ENCODE measurements at regions of chr5 and their contacts with region 1.

Region 1: GRCh38 chr5:72816311-72817145 is at the start of gene TNPO1:
- DNase-seq: peak; percentile 92
- CTCF ChIP-seq: no peak

Region 2: GRCh38 chr5:72611118-72611730 is 205.3 kb before region 1 on chr5:
- CTCF ChIA-PET with region 1: interaction called, 55 read pairs
- POLR2A ChIA-PET with region 1: interaction called, 3 read pairs
- DNase-seq: peak; percentile 63
- CTCF ChIP-seq: peak; percentile 71

Region 3: GRCh38 chr5:72796001-72796400 is 20.5 kb before region 1 on chr5:
- CTCF ChIA-PET with region 1: interaction called, 14 read pairs
- POLR2A ChIA-PET with region 1: no interaction called
- DNase-seq: no peak
- CTCF ChIP-seq: no peak

Region 4: DNA sequence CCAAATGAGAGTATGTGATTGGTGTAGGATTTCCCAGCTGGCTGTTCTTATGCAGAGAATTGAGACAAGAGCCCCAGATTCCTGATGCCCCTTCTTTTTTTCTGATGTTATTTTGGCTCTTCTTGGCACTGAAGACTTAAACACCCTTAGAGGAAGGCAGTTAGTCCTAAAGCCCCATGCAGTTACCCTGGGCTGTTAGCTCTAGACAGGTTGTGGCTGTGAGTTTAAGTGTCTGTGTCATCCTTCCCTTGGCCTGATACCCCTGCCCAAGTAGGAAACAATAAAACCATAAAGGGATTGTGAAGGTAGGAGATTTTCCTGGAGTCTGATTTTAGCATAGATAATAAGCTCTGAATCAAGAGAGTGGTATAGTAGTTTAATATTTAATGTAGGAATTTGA is 13.2 kb after region 1 on chr5:
- CTCF ChIA-PET with region 1: interaction called, 66 read pairs
- POLR2A ChIA-PET with region 1: no interaction called
- DNase-seq: no peak
- CTCF ChIP-seq: no peak

Region 5: DNA sequence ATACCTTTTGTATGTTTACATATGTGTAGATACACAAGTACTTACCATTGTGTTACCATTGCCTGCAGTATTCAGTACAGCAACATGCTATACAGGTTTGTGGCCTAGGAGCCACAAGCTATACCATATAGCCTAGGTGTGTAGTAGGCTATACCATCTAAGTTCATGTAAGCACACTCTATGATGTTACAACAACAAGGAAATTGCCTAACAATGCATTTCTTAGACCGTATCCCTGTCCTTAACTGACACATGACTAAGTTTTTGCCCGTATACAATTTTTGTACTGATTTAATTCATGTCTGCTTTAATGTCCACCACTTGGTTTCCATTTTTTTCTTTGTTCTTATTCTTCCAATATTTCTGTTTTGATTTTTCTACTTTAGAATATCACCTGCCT is 18.4 kb after region 1 on chr5:
- CTCF ChIA-PET with region 1: interaction called, 66 read pairs
- POLR2A ChIA-PET with region 1: no interaction called
- DNase-seq: no peak
- CTCF ChIP-seq: no peak

Region 6: DNA sequence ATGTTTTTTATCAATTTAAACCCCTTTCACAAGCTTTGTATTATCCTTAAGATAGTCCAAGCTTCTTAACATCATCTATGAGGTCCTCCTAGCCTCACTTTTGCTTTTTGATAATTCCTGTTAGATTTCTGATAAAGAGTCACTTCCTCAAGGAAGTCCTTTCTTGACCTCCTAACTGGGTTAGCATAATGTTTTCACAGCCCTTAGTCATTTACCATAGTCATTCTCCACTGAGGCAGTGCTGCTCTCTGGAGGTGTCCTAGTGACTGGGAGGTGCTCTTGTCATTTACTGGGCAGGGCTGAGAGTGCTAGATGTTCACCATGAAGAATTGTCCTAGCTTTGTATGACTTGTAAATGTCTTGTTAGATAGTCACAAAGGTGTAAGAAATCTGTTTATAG is 26.3 kb after region 1 on chr5:
- CTCF ChIA-PET with region 1: interaction called, 31 read pairs
- POLR2A ChIA-PET with region 1: no interaction called
- DNase-seq: no peak
- CTCF ChIP-seq: peak; percentile 23

Region 7: DNA sequence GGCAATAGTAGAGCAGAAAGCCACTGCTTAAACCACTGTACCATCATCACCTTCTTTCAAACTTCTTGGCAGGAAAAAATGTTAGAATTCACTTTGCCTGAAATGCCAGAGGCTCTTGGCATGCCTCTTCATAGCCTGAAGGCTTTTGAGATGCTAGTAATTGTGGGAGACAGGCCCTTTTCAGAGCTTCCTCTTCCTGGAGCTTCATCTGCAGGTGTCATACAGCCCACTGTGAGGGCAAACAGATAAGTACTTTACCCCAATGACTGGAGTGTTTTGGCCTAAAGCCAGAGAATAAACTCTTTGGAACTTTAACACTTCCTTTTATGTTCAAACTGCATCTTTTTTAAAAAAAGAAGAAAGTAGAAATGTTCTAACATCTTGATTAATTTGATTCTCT is 222.6 kb after region 1 on chr5:
- CTCF ChIA-PET with region 1: no interaction called
- POLR2A ChIA-PET with region 1: no interaction called
- DNase-seq: no peak
- CTCF ChIP-seq: no peak

Measured in GM10248 (cell line).